Mammary epithelial cell (primary cell): ENCODE measurements at regions of chr22 and their contacts with region 1.

Region 1: GRCh38 chr22:25702040-25702439 is 39.9 kb upstream of the MYO18B start:
- DNase-seq: peak; percentile 2
- H3K4me3 ChIP-seq: no peak overlapping the region
- H3K27ac ChIP-seq: no peak overlapping the region
- H3K4me1 ChIP-seq: peaks cover 3% of the 10 kb centered on the region
- H3K27me3 ChIP-seq: no peaks in the 10 kb centered on the region
- CTCF ChIP-seq: peak; percentile 17 to 49

Region 2: GRCh38 chr22:25235547-25236290 is 466.3 kb before region 1 on chr22:
- CTCF ChIA-PET with region 1: no interaction called
- dilution Hi-C with region 1: no loop called
- in situ Hi-C with region 1: no loop called
- intact Hi-C with region 1: loop called (anchors 5 kb)
- DNase-seq: peak; percentile 67
- H3K4me3 ChIP-seq: no peak overlapping the region
- H3K27ac ChIP-seq: no peak overlapping the region
- H3K4me1 ChIP-seq: no peaks in the 10 kb centered on the region
- H3K27me3 ChIP-seq: no peaks in the 10 kb centered on the region
- CTCF ChIP-seq: peak; percentile 60 to 87

Region 3: GRCh38 chr22:25465949-25466348 is 236.1 kb before region 1 on chr22:
- CTCF ChIA-PET with region 1: interaction called, 3 read pairs
- dilution Hi-C with region 1: no loop called
- in situ Hi-C with region 1: loop called in 1 of 2 experiments (anchors 5 kb)
- intact Hi-C with region 1: loop called (anchors 1 kb)
- DNase-seq: no peak
- H3K4me3 ChIP-seq: no peak overlapping the region
- H3K27ac ChIP-seq: no peak overlapping the region
- H3K4me1 ChIP-seq: no peaks in the 10 kb centered on the region
- H3K27me3 ChIP-seq: no peaks in the 10 kb centered on the region
- CTCF ChIP-seq: no peak

Region 4: GRCh38 chr22:25564320-25564978 is 137.6 kb before region 1 on chr22 and contains the start of gene GRK3:
- CTCF ChIA-PET with region 1: interaction called, 4 read pairs
- dilution Hi-C with region 1: no loop called
- in situ Hi-C with region 1: no loop called
- intact Hi-C with region 1: loop called (anchors 1 kb)
- DNase-seq: peak; percentile 70
- H3K4me3 ChIP-seq: peak within 1 kb of the TSS; percentile 62 to 76 (median 65)
- H3K27ac ChIP-seq: peak within 1 kb of the TSS; percentile 22
- H3K4me1 ChIP-seq: peaks cover 10% of the 10 kb centered on the region
- H3K27me3 ChIP-seq: no peaks in the 10 kb centered on the region
- CTCF ChIP-seq: no peak
- total RNA-seq, gene GRK3: 12.8 to 16.0 TPM

Region 5: DNA sequence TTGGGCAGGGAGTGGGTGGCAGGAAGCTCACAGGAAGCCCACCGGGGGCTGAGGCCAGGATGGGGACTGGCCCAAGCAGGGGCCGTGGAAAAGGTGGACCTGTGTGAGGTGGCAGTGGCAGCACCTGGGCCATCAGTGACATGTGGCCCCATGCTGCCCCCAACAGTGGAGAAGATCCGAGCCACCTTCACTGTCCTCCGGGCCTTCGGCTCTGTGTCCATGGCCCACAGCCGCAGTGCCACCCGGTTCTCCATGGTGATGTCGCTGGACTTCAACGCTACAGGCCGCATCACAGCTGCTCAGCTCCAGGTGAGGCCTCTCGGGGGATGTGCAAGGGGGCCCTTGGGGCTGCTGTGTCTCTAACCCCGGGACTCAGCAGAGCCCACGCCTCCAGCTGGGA is 77.8 kb after region 1 on chr22:
- CTCF ChIA-PET with region 1: no interaction called
- dilution Hi-C with region 1: no loop called
- in situ Hi-C with region 1: no loop called
- intact Hi-C with region 1: no loop called
- DNase-seq: no peak
- H3K4me3 ChIP-seq: no peak overlapping the region
- H3K27ac ChIP-seq: no peak overlapping the region
- H3K4me1 ChIP-seq: no peaks in the 10 kb centered on the region
- H3K27me3 ChIP-seq: no peaks in the 10 kb centered on the region
- CTCF ChIP-seq: no peak

Region 6: DNA sequence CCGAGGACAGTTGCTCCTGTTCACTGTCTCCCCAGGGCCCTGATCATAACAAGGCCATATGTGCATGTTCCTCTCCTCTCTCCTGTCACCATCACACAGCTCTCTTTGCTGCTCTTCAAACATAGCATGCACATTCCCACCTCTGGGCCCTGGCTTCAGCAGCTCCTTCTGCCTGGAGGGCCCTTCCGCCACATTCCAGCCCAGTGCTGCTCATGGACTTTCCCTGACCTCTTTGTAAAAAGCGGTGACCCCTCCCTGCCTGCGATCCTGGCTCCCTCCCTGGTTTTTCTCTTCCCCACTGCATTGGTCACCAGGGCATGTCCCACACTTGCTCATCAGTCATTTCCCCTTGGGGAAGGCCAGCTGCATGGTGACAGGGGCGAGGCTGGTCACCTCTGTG is 138.1 kb after region 1 on chr22:
- CTCF ChIA-PET with region 1: interaction called, 14 read pairs
- dilution Hi-C with region 1: no loop called
- in situ Hi-C with region 1: no loop called
- intact Hi-C with region 1: no loop called
- DNase-seq: no peak
- H3K4me3 ChIP-seq: no peak overlapping the region
- H3K27ac ChIP-seq: no peak overlapping the region
- H3K4me1 ChIP-seq: no peaks in the 10 kb centered on the region
- H3K27me3 ChIP-seq: no peaks in the 10 kb centered on the region
- CTCF ChIP-seq: no peak